Activated CD8-positive, alpha-beta memory T cell treated with anti-CD3 and anti-CD28 coated beads, Interleukin-2, amount 10 ng/mL, durations not matched to agents 7 days and 5 days (primary cell): ENCODE measurements at regions of chr7 and their contacts with region 1.

Region 1: GRCh38 chr7:151315038-151315655 is 26.5 kb upstream of the NUB1 start:
- DNase-seq: peak; percentile 88
- ATAC-seq: peak; percentile 92
- H3K4me3 Mint-ChIP-seq: peak overlapping the region; percentile 12
- H3K27ac Mint-ChIP-seq: peak overlapping the region; percentile 54
- H3K4me1 Mint-ChIP-seq: peaks cover 21% of the 10 kb centered on the region
- H3K27me3 Mint-ChIP-seq: no peaks in the 10 kb centered on the region

Region 2: GRCh38 chr7:151304856-151305255 is 10.3 kb before region 1 on chr7:
- CTCF ChIA-PET with region 1: interaction called, 22 read pairs
- DNase-seq: no peak
- ATAC-seq: no peak
- H3K4me3 Mint-ChIP-seq: peak overlapping the region; percentile 23
- H3K27ac Mint-ChIP-seq: no peak overlapping the region
- H3K4me1 Mint-ChIP-seq: peaks cover 17% of the 10 kb centered on the region
- H3K27me3 Mint-ChIP-seq: peaks cover 41% of the 10 kb centered on the region

Region 3: DNA sequence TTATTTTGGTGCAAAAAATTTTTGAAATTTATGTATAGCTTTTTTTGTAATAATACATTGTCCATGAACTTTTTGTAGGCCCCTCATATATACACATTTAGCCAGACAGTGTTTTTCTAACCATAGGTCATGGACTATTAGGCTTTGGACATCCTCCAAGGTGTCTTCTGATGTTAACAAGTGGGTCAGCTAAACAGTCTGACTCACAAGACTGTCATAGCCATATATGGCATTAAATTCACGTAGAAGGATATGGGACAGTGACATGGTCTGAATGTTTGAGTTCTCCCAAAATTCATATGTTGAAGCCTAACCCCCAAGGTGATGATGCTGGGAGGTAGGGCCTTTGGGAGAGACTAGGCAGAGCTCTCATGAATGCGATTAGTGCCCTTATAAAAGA is 12.5 kb after region 1 on chr7:
- CTCF ChIA-PET with region 1: interaction called, 37 read pairs
- DNase-seq: no peak
- ATAC-seq: no peak
- H3K4me3 Mint-ChIP-seq: no peak overlapping the region
- H3K27ac Mint-ChIP-seq: no peak overlapping the region
- H3K4me1 Mint-ChIP-seq: no peaks in the 10 kb centered on the region
- H3K27me3 Mint-ChIP-seq: peaks cover 18% of the 10 kb centered on the region

Region 4: GRCh38 chr7:151336027-151336708 is 21.0 kb after region 1 on chr7:
- CTCF ChIA-PET with region 1: interaction called, 104 read pairs
- DNase-seq: no peak
- ATAC-seq: no peak
- H3K4me3 Mint-ChIP-seq: no peak overlapping the region
- H3K27ac Mint-ChIP-seq: no peak overlapping the region
- H3K4me1 Mint-ChIP-seq: peaks cover 22% of the 10 kb centered on the region
- H3K27me3 Mint-ChIP-seq: peaks cover 2% of the 10 kb centered on the region

Region 5: GRCh38 chr7:151341357-151342101 is 26.4 kb after region 1 on chr7 and contains the start of gene NUB1:
- CTCF ChIA-PET with region 1: interaction called, 104 read pairs
- DNase-seq: peak; percentile 94
- ATAC-seq: peak; percentile 83
- H3K4me3 Mint-ChIP-seq: peak within 1 kb of the TSS; percentile 79
- H3K27ac Mint-ChIP-seq: peak within 1 kb of the TSS; percentile 97
- H3K4me1 Mint-ChIP-seq: peaks cover 35% of the 10 kb centered on the region
- H3K27me3 Mint-ChIP-seq: no peaks in the 10 kb centered on the region
- total RNA-seq, gene NUB1: 71.3 to 73.3 TPM

Region 6: GRCh38 chr7:151368136-151368571 is 53.0 kb after region 1 on chr7:
- CTCF ChIA-PET with region 1: interaction called, 11 read pairs
- DNase-seq: peak; percentile 84
- ATAC-seq: peak; percentile 99
- H3K4me3 Mint-ChIP-seq: no peak overlapping the region
- H3K27ac Mint-ChIP-seq: no peak overlapping the region
- H3K4me1 Mint-ChIP-seq: peaks cover 13% of the 10 kb centered on the region
- H3K27me3 Mint-ChIP-seq: no peaks in the 10 kb centered on the region